Colonic mucosa (tissue), 4 donors: ENCODE measurements at regions of chr12 and their contacts with region 1.

Region 1: GRCh38 chr12:93098077-93098476 is 169.0 kb upstream of the EEA1 start:
- DNase-seq: peak; percentile 85
- H3K4me3 ChIP-seq: no peak overlapping the region
- H3K27ac ChIP-seq: no peak overlapping the region
- H3K4me1 ChIP-seq: no peaks in the 10 kb centered on the region
- H3K27me3 ChIP-seq: no peaks in the 10 kb centered on the region
- CTCF ChIP-seq: peak; percentile 60

Region 2: DNA sequence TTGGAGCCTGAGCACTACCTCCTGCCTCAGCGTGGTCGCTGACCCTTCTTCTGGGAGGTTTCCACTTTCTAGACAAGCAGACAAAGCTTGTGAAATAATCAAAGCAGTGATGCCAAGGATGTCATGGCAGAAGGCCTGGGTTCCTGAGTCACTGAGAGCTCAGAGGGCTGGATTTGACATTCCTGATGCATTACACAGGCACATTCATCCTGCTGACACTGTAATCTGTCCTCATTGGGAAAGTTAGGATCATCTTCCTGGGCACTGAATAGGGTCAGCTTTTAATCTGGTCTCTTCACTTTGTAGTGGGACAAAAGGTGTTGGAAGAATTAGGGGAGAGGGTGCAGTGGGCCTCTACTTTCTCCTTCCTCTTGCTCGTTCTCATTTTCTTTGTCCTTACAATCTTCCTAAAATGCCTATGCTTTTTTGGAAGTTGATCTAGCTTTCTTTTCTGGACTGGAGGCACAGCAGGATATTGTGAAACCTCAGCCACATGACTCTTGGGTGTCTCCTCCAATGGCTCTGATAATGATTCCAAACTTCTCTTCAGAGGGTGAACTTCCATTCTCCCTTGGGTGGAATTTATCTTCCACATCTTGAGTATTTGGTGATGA is 198.6 kb before region 1 on chr12:
- intact Hi-C with region 1: no loop called
- DNase-seq: peak; percentile 53
- H3K4me3 ChIP-seq: no peak overlapping the region
- H3K27ac ChIP-seq: peak overlapping the region; percentile 67
- H3K4me1 ChIP-seq: no peaks in the 10 kb centered on the region
- H3K27me3 ChIP-seq: no peaks in the 10 kb centered on the region
- CTCF ChIP-seq: no peak

Region 3: GRCh38 chr12:93039062-93039461 is 59.0 kb before region 1 on chr12:
- intact Hi-C with region 1: loop called (anchors 5 kb)
- DNase-seq: no peak
- H3K4me3 ChIP-seq: no peak overlapping the region
- H3K27ac ChIP-seq: no peak overlapping the region
- H3K4me1 ChIP-seq: no peaks in the 10 kb centered on the region
- H3K27me3 ChIP-seq: no peaks in the 10 kb centered on the region
- CTCF ChIP-seq: no peak

Region 4: DNA sequence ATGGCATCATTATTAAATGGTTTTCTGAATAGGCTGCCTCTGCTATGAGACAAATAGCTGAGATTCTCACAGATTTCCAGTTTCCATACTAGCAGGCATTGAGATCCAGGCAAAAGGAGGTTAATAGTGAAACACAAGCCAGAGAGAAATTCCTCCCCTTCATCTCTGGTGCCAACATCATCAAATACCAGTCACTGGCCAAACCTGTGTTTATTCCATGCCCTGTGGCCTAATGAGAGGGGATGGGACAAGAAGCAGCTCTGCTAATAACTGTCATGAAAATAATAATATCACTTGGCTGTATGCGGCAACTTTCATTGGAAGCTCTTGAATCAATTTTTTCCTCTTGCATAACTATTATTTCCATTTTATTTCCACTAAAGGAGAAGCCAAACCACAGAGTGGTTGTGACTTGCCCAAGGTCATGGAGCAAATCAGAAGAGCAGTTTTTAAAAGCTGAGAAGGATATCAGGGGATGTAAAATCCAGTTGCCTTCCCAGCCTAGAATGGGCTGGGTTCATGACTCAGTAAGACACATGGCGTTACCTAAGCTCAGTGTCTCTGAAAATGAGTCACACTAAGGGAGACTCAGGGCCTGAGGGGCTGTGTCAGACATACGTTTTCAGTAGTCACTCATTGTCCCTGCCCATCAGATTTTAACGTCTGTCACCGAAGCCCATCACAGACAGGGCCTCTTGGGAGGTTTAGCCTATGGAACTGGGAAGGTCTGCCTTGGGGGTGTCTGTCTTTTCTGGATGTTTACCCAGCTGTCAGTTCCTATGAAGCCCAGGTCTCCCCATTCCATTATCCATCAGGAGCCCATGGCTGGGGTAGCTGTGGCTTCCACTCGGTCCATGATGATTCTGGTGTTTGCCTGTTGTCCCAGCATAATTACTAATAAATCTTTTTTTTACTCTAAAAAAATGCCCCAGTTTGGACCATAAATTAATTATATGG is 39.9 kb after region 1 on chr12:
- intact Hi-C with region 1: no loop called
- DNase-seq: no peak
- H3K4me3 ChIP-seq: no peak overlapping the region
- H3K27ac ChIP-seq: no peak overlapping the region
- H3K4me1 ChIP-seq: peaks cover 5% of the 10 kb centered on the region
- H3K27me3 ChIP-seq: no peaks in the 10 kb centered on the region
- CTCF ChIP-seq: no peak

Region 5: DNA sequence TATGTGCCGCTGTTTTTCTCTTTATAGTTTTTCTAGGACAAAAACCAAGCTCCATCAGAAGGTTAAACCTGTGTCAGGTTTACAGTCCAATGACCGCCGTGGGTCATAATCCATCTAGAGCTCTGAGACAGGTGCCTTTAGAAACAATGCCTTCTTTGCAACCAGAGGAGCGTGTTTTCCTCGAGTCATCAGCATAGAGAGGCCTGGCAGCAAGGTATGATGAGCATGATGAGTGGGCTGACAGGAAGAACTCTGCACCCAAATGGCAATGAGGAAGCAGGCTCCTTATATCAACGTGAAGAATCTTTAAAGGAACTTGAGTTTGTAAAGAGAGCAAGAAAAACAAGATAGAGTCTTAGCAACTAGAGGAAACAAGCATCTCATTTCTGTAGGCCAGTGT is 219.2 kb after region 1 on chr12:
- intact Hi-C with region 1: loop called (anchors 10 kb)
- DNase-seq: peak; percentile 56
- H3K4me3 ChIP-seq: no peak overlapping the region
- H3K27ac ChIP-seq: peak overlapping the region; percentile 21
- H3K4me1 ChIP-seq: no peaks in the 10 kb centered on the region
- H3K27me3 ChIP-seq: no peaks in the 10 kb centered on the region
- CTCF ChIP-seq: no peak

Region 6: DNA sequence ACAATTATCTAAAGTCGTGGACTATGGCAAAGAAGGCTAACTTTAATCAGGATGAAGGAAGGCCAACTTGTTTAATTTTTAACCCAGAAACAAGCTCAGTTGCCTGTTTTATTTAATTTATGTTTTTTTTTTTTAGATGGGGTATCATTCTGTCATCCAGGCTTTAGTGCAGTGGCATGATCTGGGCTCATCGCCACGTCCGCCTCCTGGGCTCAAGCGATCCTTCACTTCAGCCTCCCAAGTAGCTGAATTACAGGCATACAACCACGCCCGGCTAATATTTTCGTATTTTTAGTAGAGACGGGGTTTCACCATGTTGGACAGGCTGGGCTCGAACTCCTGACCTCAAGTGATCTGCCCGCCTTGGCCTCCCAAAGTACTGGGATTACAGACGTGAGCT is 299.3 kb after region 1 on chr12:
- intact Hi-C with region 1: loop called (anchors 5 kb)
- DNase-seq: no peak
- H3K4me3 ChIP-seq: no peak overlapping the region
- H3K27ac ChIP-seq: no peak overlapping the region
- H3K4me1 ChIP-seq: no peaks in the 10 kb centered on the region
- H3K27me3 ChIP-seq: no peaks in the 10 kb centered on the region
- CTCF ChIP-seq: no peak

Region 7: DNA sequence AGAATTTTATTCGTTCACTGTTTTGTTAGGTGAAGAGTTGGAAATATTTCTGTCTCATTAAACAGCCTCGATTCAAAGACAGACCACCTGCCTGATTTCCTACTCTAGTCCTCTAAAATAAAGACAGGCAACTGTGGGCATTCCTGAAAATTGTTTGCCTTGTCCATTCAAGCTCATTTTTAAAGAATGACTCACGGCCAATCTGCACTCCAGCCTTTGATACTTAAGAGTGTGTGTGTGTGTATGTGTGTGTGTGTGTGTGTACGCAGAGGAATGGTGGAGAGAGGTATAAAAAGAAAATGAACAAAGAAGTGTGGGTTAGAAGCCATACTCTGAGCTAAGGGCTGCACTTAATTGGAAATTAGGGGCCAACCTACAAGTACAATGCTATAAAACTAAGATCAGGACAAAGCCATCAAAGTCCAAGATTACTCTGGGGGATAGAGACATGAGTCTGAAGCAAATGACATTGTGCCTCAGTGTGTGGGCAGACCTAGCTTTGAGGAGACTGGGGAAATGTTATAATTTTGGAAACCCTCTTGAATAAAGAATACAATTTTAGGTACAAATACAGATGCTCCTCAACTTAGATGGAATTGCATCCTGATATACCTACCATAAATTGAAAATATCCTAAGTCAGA is 428.8 kb after region 1 on chr12:
- intact Hi-C with region 1: no loop called
- DNase-seq: no peak
- H3K4me3 ChIP-seq: no peak overlapping the region
- H3K27ac ChIP-seq: no peak overlapping the region
- H3K4me1 ChIP-seq: no peaks in the 10 kb centered on the region
- H3K27me3 ChIP-seq: no peaks in the 10 kb centered on the region
- CTCF ChIP-seq: no peak